Left cardiac atrium (tissue), 4 donors: ENCODE measurements at regions of chr3 and their contacts with region 1.

Region 1: GRCh38 chr3:51845129-51845528 is 16.3 kb upstream of the IQCF2 start:
- DNase-seq: no peak
- ATAC-seq: no peak

Region 2: DNA sequence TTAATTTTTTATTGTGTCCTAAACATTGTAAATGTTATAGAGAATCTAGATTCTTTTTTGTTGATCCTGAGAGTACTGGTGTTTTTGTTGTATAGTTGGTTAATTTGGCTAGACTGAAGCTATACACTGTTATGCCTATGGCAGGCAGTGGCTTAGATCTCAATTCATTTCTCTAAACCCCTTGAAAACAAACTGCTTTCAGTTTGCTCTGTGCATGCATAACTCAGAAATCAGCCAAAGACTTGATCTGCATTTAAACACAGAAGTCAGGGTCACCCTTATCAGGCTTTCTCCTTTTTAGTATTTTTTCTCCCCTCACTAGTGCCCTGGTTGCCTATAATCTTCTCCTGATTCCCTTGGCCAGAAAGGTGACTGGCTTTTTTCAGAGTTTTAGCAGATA is 809.5 kb before region 1 on chr3:
- intact Hi-C with region 1: no loop called
- DNase-seq: no peak
- ATAC-seq: no peak

Region 3: DNA sequence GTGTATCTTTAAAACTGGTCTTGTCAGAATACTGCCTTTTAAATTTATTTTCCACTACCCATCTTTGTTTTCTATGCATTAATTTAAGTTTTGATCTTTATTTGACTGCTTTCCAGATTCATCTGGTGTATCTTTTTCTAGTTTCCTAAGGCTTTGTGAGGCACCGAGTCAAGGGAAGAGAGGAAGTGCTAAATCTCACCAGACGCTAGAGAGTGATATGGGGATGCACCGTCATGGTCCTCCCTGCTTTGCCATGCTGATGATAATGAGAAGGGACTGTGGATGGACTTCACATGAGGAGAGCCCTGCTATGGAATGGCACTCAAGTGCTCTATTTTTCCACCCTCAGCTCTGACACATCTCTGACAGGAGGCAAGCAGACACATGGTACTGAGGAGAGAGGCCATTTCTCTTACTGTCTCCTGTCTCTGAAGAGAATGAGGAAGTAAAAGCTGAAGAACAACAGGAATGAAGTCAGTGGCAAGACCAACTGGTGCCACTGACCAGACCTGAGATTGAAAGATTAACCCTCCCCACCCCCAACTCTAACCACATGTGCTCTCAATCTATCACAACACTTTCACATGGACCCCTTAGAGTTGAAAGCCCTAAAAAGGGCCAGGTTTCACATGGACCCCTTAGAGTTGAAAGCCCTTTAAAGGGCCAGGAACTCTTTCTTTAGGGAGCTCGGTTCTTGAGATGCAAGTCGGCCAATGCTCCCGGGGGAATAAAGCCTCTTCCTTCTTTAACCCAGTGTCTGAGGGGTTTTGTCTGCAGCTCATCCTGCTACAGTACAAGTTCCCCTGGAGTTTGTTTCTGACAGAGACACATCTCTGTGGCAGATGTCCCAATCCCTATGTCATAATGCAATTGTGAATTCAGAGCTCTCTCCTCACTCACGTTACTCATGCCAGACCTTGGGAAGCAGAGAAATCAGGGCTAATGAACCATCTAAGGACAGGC is 15.9 kb after region 1 on chr3 and contains the start of gene IQCF2:
- intact Hi-C with region 1: loop called in 1 of 2 experiments (anchors 1 kb)
- DNase-seq: no peak
- ATAC-seq: no peak
- total RNA-seq, gene IQCF2: not detected